GM10248 (cell line): ENCODE measurements at regions of chr10 and their contacts with region 1.

Region 1: GRCh38 chr10:11793762-11794479 is 29.2 kb upstream of the PROSER2 start:
- DNase-seq: no peak
- CTCF ChIP-seq: no peak

Region 2: GRCh38 chr10:11655836-11656235 is 138.1 kb before region 1 on chr10:
- CTCF ChIA-PET with region 1: no interaction called
- POLR2A ChIA-PET with region 1: no interaction called
- DNase-seq: no peak
- CTCF ChIP-seq: no peak

Region 3: DNA sequence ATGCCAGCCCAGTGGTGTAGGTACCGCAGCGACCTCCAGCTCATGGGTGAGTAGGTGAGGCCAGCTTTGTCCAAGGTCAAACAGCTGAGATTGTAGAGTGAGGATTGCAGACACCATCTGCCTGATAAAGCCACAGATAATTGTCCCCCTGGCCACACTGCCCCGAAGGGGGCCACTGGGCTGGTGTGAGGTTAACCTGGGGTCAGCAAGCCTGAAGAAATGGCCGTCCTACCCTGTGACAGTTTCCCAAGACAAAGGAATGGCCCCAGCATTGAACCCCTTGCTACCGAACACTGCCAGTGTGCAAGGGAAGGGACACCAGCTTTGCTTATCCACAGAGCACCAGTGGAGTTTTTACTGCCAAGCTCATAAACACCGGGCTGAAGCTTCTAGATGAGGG is 28.8 kb before region 1 on chr10:
- CTCF ChIA-PET with region 1: no interaction called
- POLR2A ChIA-PET with region 1: no interaction called
- DNase-seq: no peak
- CTCF ChIP-seq: no peak

Region 4: GRCh38 chr10:11822031-11822756 is 28.3 kb after region 1 on chr10:
- CTCF ChIA-PET with region 1: interaction called, 10 read pairs
- POLR2A ChIA-PET with region 1: no interaction called
- DNase-seq: no peak
- CTCF ChIP-seq: no peak